BJ (cell line): ENCODE measurements at regions of chr17 and their contacts with region 1.

Region 1: DNA sequence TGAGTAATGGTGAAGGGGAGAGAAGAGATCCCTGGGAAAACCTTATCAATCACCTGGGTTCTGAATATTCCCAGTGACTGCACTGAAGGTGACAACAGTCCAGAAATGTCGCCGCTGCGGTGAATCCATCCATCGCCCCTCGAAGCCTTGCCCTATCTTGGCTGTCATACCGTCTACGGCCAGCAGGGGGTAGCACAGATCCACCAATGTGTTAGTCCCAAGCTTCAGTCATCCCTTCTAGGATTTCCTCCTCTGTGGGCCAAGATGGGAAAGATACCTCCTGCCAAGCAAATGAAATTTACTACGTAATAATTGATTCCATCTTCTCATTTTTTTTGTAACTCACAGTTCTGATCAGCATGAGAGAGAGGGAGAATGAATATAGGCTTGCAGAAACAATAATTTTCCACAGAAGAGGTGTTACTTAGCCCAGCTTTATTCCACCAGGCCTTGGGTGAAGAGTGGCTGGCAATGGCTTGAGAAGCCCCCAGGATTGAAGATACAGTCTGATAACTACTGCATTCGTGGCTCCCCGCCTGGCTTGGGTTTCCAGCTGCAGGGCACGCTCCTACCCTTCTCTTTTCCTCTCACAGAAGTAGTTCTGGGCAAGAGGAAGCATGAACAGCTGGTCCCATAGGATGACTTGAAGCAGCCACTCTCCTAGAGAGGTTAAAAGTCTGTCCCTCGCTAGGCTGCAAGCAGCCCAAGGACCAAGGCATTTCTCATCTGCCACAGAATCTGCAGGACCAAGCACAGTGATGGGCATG is 2.6 kb upstream of the FMNL1 start:
- DNase-seq: no peak
- H3K4me3 ChIP-seq: no peak overlapping the region
- H3K27me3 ChIP-seq: peaks cover 5% of the 10 kb centered on the region; the same call in 1 of the 2 replicates
- CTCF ChIP-seq: peak; percentile 84

Region 2: GRCh38 chr17:45060797-45061605 is 158.1 kb before region 1 on chr17 and contains the start of gene NMT1:
- CTCF ChIA-PET with region 1: no interaction called
- POLR2A ChIA-PET with region 1: no interaction called
- DNase-seq: peak; percentile 98
- H3K4me3 ChIP-seq: peak within 1 kb of the TSS; percentile 91
- H3K27me3 ChIP-seq: no peaks in the 10 kb centered on the region
- CTCF ChIP-seq: no peak
- polyA plus RNA-seq, gene NMT1: 48.1 and 62.5 TPM in 2 replicates

Region 3: GRCh38 chr17:45197555-45198334 is 21.3 kb before region 1 on chr17:
- CTCF ChIA-PET with region 1: interaction called, 14 read pairs
- POLR2A ChIA-PET with region 1: no interaction called
- DNase-seq: no peak
- H3K4me3 ChIP-seq: no peak overlapping the region
- H3K27me3 ChIP-seq: no peaks in the 10 kb centered on the region
- CTCF ChIP-seq: peak; percentile 100

Region 4: GRCh38 chr17:45241328-45242011 is 22.4 kb after region 1 on chr17:
- CTCF ChIA-PET with region 1: interaction called, 51 read pairs
- POLR2A ChIA-PET with region 1: no interaction called
- DNase-seq: no peak
- H3K4me3 ChIP-seq: no peak overlapping the region
- H3K27me3 ChIP-seq: no peaks in the 10 kb centered on the region; the same call in 1 of the 2 replicates
- CTCF ChIP-seq: no peak

Region 5: DNA sequence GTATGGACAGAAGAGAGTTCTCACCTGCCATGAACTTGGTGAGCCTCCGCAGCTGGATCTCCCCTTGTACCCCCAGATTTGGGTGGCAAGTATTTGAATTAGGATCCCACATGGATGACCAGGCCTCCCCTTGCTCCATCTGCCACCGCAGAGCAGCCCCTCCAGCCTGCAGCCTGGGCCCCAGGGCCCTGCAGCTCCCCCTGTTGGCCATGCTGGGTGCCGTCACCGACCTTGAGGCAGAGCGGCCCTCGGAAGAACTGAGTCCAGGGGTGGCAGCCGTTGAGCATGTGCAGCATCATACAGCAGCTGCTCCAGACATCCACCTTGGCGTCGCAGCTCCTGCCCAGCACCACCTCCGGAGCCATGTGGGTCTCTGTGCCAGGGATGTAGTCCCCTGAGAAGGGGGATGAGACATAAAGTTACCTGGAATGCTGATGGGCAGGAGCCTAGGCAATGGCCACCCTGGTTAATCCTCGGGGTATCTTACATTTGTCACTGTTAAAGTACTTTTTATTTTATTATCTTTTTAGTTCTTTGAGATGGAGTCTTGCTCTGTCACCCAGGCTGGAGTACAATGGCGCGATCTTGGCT is 51.8 kb after region 1 on chr17:
- CTCF ChIA-PET with region 1: interaction called, 18 read pairs
- POLR2A ChIA-PET with region 1: no interaction called
- DNase-seq: no peak
- H3K4me3 ChIP-seq: no peak overlapping the region
- H3K27me3 ChIP-seq: no peaks in the 10 kb centered on the region
- CTCF ChIP-seq: peak; percentile 65

Region 6: GRCh38 chr17:45371414-45372327 is 152.6 kb after region 1 on chr17:
- CTCF ChIA-PET with region 1: interaction called, 11 read pairs
- POLR2A ChIA-PET with region 1: no interaction called
- DNase-seq: peak; percentile 91
- H3K4me3 ChIP-seq: no peak overlapping the region
- H3K27me3 ChIP-seq: no peaks in the 10 kb centered on the region
- CTCF ChIP-seq: peak; percentile 33; the same call in 1 of the 2 replicates

Region 7: GRCh38 chr17:45394913-45395568 is 176.0 kb after region 1 on chr17:
- CTCF ChIA-PET with region 1: interaction called, 85 read pairs
- POLR2A ChIA-PET with region 1: no interaction called
- DNase-seq: peak; percentile 27
- H3K4me3 ChIP-seq: peak overlapping the region; percentile 4; the same call in 1 of the 2 replicates
- H3K27me3 ChIP-seq: peaks cover 1% of the 10 kb centered on the region; the same call in 1 of the 2 replicates
- CTCF ChIP-seq: peak; percentile 80